ENCODE measurements at regions of chrX and their contacts with region 1.

Region 1: GRCh38 chrX:74449329-74449936 is 28.1 kb downstream of the SLC16A2 start:
- DNase-seq: peak; percentile 48
- H3K4me3 ChIP-seq: no peak overlapping the region
- CTCF ChIP-seq: no peak

Region 2: DNA sequence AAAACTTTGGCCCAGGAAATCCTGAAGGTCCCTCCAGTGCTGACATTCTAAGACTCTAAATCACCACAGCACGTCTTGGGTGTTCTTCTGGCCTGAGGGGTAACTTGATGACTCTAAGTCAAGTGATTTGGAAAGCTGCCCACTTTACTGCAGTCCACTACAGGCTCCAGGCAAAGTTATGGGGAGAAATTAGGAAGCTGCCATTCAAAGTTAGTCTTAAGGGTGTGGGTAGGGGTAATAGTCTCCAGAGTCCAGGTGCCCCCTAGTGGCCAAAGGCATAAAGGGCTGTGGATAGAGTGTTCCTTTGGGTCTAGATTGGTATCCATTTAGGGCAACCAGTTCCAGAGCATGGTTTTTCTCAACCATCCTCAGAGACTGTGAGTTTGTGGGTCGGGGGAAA is 66.8 kb before region 1 on chrX:
- in situ Hi-C with region 1: loop called (anchors 5 kb)
- DNase-seq: peak; percentile 29
- H3K4me3 ChIP-seq: no peak overlapping the region
- CTCF ChIP-seq: peak; percentile 83

Region 3: GRCh38 chrX:74498924-74499323 is 49.5 kb after region 1 on chrX:
- in situ Hi-C with region 1: no loop called
- DNase-seq: no peak
- H3K4me3 ChIP-seq: no peak overlapping the region
- CTCF ChIP-seq: no peak

Measured in astrocyte of the cerebellum (primary cell).